Activated CD4-positive, alpha-beta memory T cell treated with anti-CD3 and anti-CD28 coated beads for 36 hours (primary cell): ENCODE measurements at regions of chr5 and their contacts with region 1.

Region 1: GRCh38 chr5:68239487-68239886 is 23.9 kb downstream of the PIK3R1 start:
- DNase-seq: peak; percentile 88
- H3K4me3 Mint-ChIP-seq: peak overlapping the region; percentile 52
- H3K27ac Mint-ChIP-seq: peak overlapping the region; percentile 58
- H3K4me1 Mint-ChIP-seq: peaks cover 82% of the 10 kb centered on the region
- H3K27me3 Mint-ChIP-seq: no peaks in the 10 kb centered on the region

Region 2: GRCh38 chr5:68215208-68215897 is 24.1 kb before region 1 on chr5 and contains the start of gene PIK3R1:
- CTCF ChIA-PET with region 1: interaction called, 4 read pairs
- POLR2A ChIA-PET with region 1: interaction called, 6 read pairs
- intact Hi-C with region 1: loop called (anchors 1 kb)
- DNase-seq: peak; percentile 95
- H3K4me3 Mint-ChIP-seq: peak within 1 kb of the TSS; percentile 91
- H3K27ac Mint-ChIP-seq: peak within 1 kb of the TSS; percentile 97
- H3K4me1 Mint-ChIP-seq: peaks cover 39% of the 10 kb centered on the region
- H3K27me3 Mint-ChIP-seq: no peaks in the 10 kb centered on the region
- total RNA-seq, gene PIK3R1: 35.3 to 40.9 TPM